CD4-positive, alpha-beta T cell (primary cell): ENCODE measurements at regions of chr15 and their contacts with region 1.

Region 1: GRCh38 chr15:58517682-58518525 is 86.1 kb downstream of the LIPC start:
- DNase-seq: peak in 3 of 14 experiments; percentile 22 to 40 (median 38)
- ATAC-seq: peak; percentile 50
- H3K4me3 ChIP-seq: no peak overlapping the region
- H3K4me3 Mint-ChIP-seq: peak overlapping the region; percentile 31
- H3K27ac ChIP-seq: peak overlapping the region; percentile 18 to 48
- H3K27ac Mint-ChIP-seq: peak overlapping the region; percentile 60
- H3K4me1 ChIP-seq: peaks cover 36% of the 10 kb centered on the region
- H3K4me1 Mint-ChIP-seq: peaks cover 56% of the 10 kb centered on the region
- H3K27me3 ChIP-seq: no peaks in the 10 kb centered on the region
- H3K27me3 Mint-ChIP-seq: no peaks in the 10 kb centered on the region
- CTCF ChIP-seq: no peak

Region 2: DNA sequence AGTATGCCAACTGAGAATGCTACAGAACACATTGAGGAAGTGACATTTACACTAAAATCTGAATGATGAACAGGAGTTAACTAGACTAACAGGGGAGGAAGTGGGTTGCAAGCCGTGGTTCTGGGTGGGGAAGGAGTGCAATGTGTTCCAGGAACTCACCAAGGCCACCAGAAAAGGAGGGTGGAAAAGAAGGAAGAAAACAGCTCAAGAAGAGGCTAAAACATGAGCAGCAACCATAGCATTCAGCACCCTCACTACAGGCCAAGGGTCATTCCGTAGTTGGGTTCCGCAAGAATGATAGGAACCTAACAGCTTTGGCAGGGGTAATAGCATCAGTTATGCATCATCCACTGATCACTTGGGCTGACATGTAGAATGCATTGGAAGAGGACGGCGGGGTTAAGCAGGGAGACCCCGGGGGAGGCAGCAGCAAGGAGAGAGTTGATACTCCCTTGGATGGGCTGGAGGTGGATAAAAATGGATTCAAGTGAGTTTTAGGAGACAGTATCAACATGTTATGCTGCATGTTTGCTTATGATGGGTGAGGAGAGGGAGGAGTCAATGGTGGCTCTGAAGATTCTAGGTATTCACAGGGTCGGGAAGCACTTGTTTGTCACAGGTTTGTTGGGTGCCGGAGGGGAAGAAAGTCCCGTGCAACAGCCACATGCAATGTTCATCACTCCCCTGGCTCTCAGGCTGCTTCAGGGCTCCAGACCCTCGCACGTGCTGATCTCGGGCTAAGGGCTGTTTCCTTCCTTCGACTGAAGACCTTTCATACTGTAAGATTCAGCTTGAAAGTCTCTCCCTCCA is 32.9 kb before region 1 on chr15:
- CTCF ChIA-PET with region 1: no interaction called
- POLR2A ChIA-PET with region 1: no interaction called
- intact Hi-C with region 1: loop called in 1 of 2 experiments (anchors 5 kb)
- DNase-seq: peak in 9 of 14 experiments; percentile 13 to 84 (median 32)
- ATAC-seq: peak; percentile 88
- H3K4me3 ChIP-seq: no peak overlapping the region
- H3K4me3 Mint-ChIP-seq: peak overlapping the region; percentile 17
- H3K27ac ChIP-seq: peak overlapping the region; percentile 31 to 53
- H3K27ac Mint-ChIP-seq: peak overlapping the region; percentile 71
- H3K4me1 ChIP-seq: peaks cover 48% of the 10 kb centered on the region
- H3K4me1 Mint-ChIP-seq: peaks cover 43% of the 10 kb centered on the region
- H3K27me3 ChIP-seq: no peaks in the 10 kb centered on the region
- H3K27me3 Mint-ChIP-seq: no peaks in the 10 kb centered on the region
- CTCF ChIP-seq: no peak

Region 3: GRCh38 chr15:58574631-58575030 is 56.7 kb after region 1 on chr15:
- CTCF ChIA-PET with region 1: no interaction called
- POLR2A ChIA-PET with region 1: no interaction called
- intact Hi-C with region 1: no loop called
- DNase-seq: no peak
- ATAC-seq: no peak
- H3K4me3 ChIP-seq: no peak overlapping the region
- H3K4me3 Mint-ChIP-seq: no peak overlapping the region
- H3K27ac ChIP-seq: no peak overlapping the region
- H3K27ac Mint-ChIP-seq: no peak overlapping the region
- H3K4me1 ChIP-seq: peaks cover 3% of the 10 kb centered on the region
- H3K4me1 Mint-ChIP-seq: peaks cover 7% of the 10 kb centered on the region
- H3K27me3 ChIP-seq: no peaks in the 10 kb centered on the region
- H3K27me3 Mint-ChIP-seq: no peaks in the 10 kb centered on the region
- CTCF ChIP-seq: no peak